Common myeloid progenitor, CD34-positive (primary cell): ENCODE measurements at regions of chr3 and their contacts with region 1.

Region 1: GRCh38 chr3:24237971-24238767 is 256.5 kb downstream of the THRB start:
- DNase-seq: peak; percentile 76 to 87 (median 84)
- H3K4me3 ChIP-seq: no peak overlapping the region
- H3K27ac ChIP-seq: no peak overlapping the region
- H3K4me1 ChIP-seq: peaks cover 0 to 12% (median 2%) of the 10 kb centered on the region in 4 experiments
- H3K27me3 ChIP-seq: no peaks in the 10 kb centered on the region

Region 2: GRCh38 chr3:23996095-23996524 is 242.1 kb before region 1 on chr3:
- CTCF ChIA-PET with region 1: interaction called, 12 read pairs
- POLR2A ChIA-PET with region 1: no interaction called
- DNase-seq: no peak
- H3K4me3 ChIP-seq: no peak overlapping the region
- H3K27ac ChIP-seq: no peak overlapping the region
- H3K4me1 ChIP-seq: peaks cover 21 to 57% (median 35%) of the 10 kb centered on the region in 4 experiments
- H3K27me3 ChIP-seq: no peaks in the 10 kb centered on the region

Region 3: GRCh38 chr3:24225385-24225950 is 12.7 kb before region 1 on chr3:
- CTCF ChIA-PET with region 1: interaction called, 14 read pairs
- POLR2A ChIA-PET with region 1: no interaction called
- DNase-seq: no peak
- H3K4me3 ChIP-seq: no peak overlapping the region
- H3K27ac ChIP-seq: peak overlapping the region in 1 of 2 experiments; percentile 44
- H3K4me1 ChIP-seq: peaks cover 0 to 14% (median 8%) of the 10 kb centered on the region in 4 experiments
- H3K27me3 ChIP-seq: no peaks in the 10 kb centered on the region

Region 4: DNA sequence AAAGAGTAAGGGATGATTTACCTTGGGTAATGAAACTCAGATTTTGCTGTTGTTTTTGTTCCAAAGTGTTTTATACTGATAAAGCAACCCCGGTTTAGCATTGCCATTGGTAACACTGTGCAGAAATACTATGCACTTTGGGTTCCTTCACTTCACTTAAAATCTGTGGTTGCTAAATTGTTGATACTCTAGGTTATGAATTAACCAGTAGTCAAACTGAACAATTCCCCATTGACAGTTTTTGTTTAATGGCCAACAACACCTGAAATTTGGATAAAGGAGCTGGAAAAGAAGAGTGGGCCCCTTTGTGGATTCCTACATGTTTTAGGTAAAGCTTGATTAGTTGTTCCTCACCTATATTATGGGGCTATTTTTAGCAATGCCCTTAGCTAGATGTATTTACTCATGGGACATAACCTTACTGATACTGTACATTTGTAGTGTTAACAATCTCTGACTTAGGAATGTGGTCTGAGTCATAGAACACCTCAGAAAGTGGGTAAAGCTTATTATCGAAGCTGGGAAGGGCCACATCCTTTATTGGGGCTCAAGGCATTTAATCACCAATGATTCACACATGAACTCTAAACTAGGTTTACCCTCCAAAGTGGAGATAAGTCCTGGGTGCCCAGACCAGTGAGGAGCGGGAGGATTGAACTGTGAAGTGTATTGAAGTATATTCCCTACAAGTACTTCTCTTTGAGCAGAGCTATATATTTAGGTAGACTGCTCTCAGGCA is 286.0 kb after region 1 on chr3:
- CTCF ChIA-PET with region 1: no interaction called
- POLR2A ChIA-PET with region 1: no interaction called
- DNase-seq: no peak
- H3K4me3 ChIP-seq: no peak overlapping the region
- H3K27ac ChIP-seq: no peak overlapping the region
- H3K4me1 ChIP-seq: peaks cover 0 to 23% (median 14%) of the 10 kb centered on the region in 4 experiments
- H3K27me3 ChIP-seq: peaks cover 0 to 6% (median 2%) of the 10 kb centered on the region in 5 experiments